Posterior vena cava (tissue), 2 donors: ENCODE measurements at regions of chr15 and their contacts with region 1.

Region 1: GRCh38 chr15:79572691-79573404 is 140.7 kb downstream of the MINAR1 start:
- DNase-seq: no peak

Region 2: GRCh38 chr15:80234883-80235282 is 662.0 kb after region 1 on chr15:
- intact Hi-C with region 1: no loop called
- DNase-seq: no peak

Region 3: GRCh38 chr15:80835338-80835737 is 1262.5 kb after region 1 on chr15:
- intact Hi-C with region 1: loop called in 1 of 2 experiments (anchors 5 kb)
- DNase-seq: no peak